Activated CD8-positive, alpha-beta T cell treated with anti-CD3 and anti-CD28 coated beads for 36 hours (primary cell): ENCODE measurements at regions of chrX and their contacts with region 1.

Region 1: GRCh38 chrX:21940356-21940829 is at the start of gene SMS:
- DNase-seq: peak; percentile 75
- ATAC-seq: peak; percentile 71
- H3K4me3 Mint-ChIP-seq: peak within 1 kb of the TSS; percentile 91
- H3K27ac Mint-ChIP-seq: peak within 1 kb of the TSS; percentile 92
- H3K4me1 Mint-ChIP-seq: peaks cover 32% of the 10 kb centered on the region
- H3K27me3 Mint-ChIP-seq: no peaks in the 10 kb centered on the region
- CTCF ChIP-seq: no peak
- total RNA-seq, gene SMS: 175 to 184 TPM

Region 2: DNA sequence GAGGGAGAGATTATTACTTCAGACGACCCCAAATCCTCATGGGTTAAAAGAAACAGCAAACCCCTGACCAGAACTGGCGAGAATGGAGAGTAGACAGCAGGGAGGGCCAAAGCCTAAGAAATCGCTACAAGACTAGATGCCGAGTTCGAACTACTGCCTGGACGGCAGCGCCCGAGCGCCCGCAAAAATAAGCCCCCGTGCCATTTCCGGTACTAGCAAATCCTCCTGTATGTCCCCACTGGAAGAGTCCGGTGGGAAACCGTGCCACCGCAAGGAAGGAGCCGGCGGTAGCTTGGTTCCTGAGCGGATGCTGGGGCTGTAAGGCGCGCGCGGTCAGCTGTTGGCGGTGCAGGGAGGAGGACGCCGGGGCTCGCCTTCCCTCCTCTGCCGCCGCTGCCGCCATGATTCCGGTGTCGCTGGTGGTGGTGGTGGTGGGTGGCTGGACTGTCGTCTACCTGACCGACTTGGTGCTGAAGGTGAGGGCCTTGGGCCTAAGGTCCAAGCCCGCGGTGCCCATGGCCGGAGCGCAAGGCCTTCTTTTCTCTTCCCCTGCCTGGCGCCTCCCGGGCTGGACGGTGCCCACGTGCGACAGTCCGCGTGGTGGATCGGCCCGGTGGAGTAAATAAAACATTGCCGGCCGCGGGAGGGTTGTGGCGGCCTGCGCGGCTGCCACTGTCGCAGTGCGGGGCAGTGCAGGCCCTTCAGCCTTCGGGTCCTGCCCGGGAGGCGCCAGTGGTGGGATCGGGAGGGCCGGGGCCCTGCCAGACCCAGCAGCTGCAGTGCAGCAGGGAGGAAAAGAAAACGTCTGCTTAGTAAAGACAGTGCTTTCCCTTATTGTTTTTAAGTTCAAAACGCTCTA is 100.8 kb before region 1 on chrX and contains the start of gene MBTPS2:
- CTCF ChIA-PET with region 1: no interaction called
- POLR2A ChIA-PET with region 1: no interaction called
- intact Hi-C with region 1: loop called (anchors 10 kb)
- DNase-seq: peak; percentile 86
- ATAC-seq: peak; percentile 94
- H3K4me3 Mint-ChIP-seq: peak within 1 kb of the TSS; percentile 81
- H3K27ac Mint-ChIP-seq: peak within 1 kb of the TSS; percentile 89
- H3K4me1 Mint-ChIP-seq: peaks cover 9% of the 10 kb centered on the region
- H3K27me3 Mint-ChIP-seq: no peaks in the 10 kb centered on the region
- CTCF ChIP-seq: no peak
- total RNA-seq, gene MBTPS2: 12.6 to 12.8 TPM

Region 3: DNA sequence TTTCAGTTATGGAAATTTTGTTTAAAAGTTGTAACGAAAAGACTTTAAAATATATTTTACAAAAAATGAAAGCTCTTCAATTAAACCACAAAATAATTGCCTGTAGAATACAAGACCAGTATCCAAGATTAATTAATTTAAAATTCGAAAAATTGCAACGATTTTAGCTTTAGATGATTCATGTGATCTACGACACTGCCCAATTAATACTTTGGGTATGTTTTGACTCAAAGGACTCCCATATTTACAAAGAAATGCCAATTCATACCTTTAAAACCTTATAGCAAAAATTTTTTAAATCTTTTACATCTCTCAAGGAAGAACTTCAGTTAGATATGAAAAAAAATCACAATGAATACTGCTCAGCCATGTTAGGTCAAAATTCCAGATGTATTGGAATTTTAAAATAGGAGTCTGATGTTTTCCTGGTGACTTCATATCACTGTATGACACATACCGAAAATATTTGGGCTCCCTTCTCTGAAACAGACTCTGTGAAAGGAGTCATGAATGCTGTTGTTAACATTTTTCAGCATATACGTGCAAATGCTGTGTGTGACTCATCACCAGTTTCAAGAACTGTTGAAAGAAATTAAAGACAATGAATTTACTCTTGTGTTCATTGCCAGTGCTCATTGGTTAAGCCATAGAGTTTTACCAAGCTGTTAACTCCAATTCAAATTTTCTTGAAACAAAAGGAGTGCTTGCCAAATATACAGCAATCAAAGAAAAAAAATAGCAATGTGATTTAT is 13.7 kb before region 1 on chrX:
- CTCF ChIA-PET with region 1: interaction called, 3 read pairs
- POLR2A ChIA-PET with region 1: no interaction called
- intact Hi-C with region 1: loop called (anchors 2 kb)
- DNase-seq: no peak
- ATAC-seq: peak; percentile 73
- H3K4me3 Mint-ChIP-seq: peak overlapping the region; percentile 29
- H3K27ac Mint-ChIP-seq: peak overlapping the region; percentile 90
- H3K4me1 Mint-ChIP-seq: peaks cover 34% of the 10 kb centered on the region
- H3K27me3 Mint-ChIP-seq: no peaks in the 10 kb centered on the region
- CTCF ChIP-seq: no peak

Region 4: GRCh38 chrX:21955403-21956189 is 15.2 kb after region 1 on chrX:
- CTCF ChIA-PET with region 1: no interaction called
- POLR2A ChIA-PET with region 1: no interaction called
- intact Hi-C with region 1: no loop called
- DNase-seq: no peak
- ATAC-seq: no peak
- H3K4me3 Mint-ChIP-seq: no peak overlapping the region
- H3K27ac Mint-ChIP-seq: no peak overlapping the region
- H3K4me1 Mint-ChIP-seq: peaks cover 56% of the 10 kb centered on the region
- H3K27me3 Mint-ChIP-seq: no peaks in the 10 kb centered on the region
- CTCF ChIP-seq: no peak

Region 5: DNA sequence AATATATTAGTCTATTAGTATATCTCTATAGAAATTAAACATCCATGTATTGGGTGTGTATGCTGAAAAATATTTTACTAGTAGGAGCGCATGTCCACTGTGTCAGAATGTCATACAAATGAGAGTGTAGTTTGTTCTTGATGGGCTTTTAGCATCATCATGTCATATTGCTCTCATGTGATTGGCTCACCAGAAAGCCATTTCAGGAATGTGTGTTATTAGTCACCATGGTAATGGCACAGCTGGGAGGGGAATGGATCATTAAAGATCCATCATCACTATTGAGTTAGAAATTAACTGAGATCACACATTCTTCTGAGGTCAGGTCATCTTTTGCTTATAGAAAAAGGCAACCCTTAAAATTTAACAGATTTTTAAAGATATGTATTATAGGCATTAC is 169.0 kb after region 1 on chrX:
- CTCF ChIA-PET with region 1: no interaction called
- POLR2A ChIA-PET with region 1: no interaction called
- intact Hi-C with region 1: no loop called
- DNase-seq: no peak
- ATAC-seq: no peak
- H3K4me3 Mint-ChIP-seq: no peak overlapping the region
- H3K27ac Mint-ChIP-seq: no peak overlapping the region
- H3K4me1 Mint-ChIP-seq: peaks cover 9% of the 10 kb centered on the region
- H3K27me3 Mint-ChIP-seq: no peaks in the 10 kb centered on the region
- CTCF ChIP-seq: no peak